ENCODE measurements at regions of chr5 and their contacts with region 1.

Region 1: DNA sequence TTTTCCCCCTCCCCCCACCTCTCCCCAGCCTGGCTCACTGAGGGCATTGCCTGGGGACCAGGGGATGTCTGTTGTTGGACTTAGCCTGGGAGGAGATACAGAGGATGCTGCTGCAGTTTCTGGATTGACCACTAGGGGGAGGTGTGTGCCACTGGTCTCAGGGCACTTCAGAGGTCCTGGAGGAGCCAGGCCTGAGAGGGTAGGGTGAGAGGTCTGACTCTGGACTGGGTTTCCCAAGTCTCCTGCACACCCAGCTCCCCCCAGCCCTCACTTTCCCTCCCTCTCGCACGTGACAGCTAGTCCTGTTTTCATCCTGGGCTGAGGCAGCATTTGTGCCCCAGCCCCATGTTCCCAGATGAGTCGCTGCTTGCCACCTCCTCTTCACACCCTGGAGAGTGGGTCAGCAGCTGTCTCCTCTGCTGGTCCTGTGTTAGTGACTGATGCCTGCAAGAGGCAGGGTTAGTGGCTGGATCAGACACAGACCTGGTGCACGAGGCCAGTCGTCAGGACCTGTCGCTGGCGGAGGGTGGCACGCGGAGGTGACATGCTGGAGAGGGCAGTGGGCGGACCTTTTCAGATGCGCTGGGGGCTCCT is 4.4 kb downstream of the IL3 start:
- DNase-seq: peak; percentile 90
- H3K4me3 Mint-ChIP-seq: peak overlapping the region; percentile 11
- H3K27ac Mint-ChIP-seq: peak overlapping the region; percentile 7
- H3K4me1 Mint-ChIP-seq: peaks cover 22% of the 10 kb centered on the region
- H3K27me3 Mint-ChIP-seq: no peaks in the 10 kb centered on the region

Region 2: GRCh38 chr5:131810510-131811249 is 254.2 kb before region 1 on chr5:
- CTCF ChIA-PET with region 1: interaction called, 12 read pairs
- POLR2A ChIA-PET with region 1: no interaction called
- intact Hi-C with region 1: loop called (anchors 1 kb)
- DNase-seq: no peak
- H3K4me3 Mint-ChIP-seq: no peak overlapping the region
- H3K27ac Mint-ChIP-seq: no peak overlapping the region
- H3K4me1 Mint-ChIP-seq: no peaks in the 10 kb centered on the region
- H3K27me3 Mint-ChIP-seq: no peaks in the 10 kb centered on the region

Region 3: DNA sequence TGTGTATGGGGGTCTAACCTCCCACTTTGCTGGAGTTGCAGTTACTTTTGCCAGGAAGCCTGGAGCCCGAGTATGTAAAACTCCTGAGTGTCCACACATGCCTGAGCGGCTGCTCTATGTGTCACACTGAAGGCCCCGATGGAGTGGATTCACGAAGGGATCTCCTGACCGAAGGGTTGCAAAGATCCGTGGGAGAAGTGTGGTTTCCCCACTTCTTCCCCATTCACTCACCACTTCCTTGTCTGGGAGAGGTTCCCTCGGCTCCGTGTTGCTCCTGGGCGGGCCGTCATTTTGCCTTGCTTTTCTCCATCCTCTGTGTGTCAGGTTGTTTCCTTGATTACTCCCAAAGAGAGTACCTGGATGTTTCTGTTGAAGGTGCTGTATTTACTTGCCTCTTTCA is 20.6 kb before region 1 on chr5:
- CTCF ChIA-PET with region 1: interaction called, 23 read pairs
- POLR2A ChIA-PET with region 1: no interaction called
- intact Hi-C with region 1: no loop called
- DNase-seq: no peak
- H3K4me3 Mint-ChIP-seq: no peak overlapping the region
- H3K27ac Mint-ChIP-seq: no peak overlapping the region
- H3K4me1 Mint-ChIP-seq: no peaks in the 10 kb centered on the region
- H3K27me3 Mint-ChIP-seq: peaks cover 8% of the 10 kb centered on the region

Region 4: DNA sequence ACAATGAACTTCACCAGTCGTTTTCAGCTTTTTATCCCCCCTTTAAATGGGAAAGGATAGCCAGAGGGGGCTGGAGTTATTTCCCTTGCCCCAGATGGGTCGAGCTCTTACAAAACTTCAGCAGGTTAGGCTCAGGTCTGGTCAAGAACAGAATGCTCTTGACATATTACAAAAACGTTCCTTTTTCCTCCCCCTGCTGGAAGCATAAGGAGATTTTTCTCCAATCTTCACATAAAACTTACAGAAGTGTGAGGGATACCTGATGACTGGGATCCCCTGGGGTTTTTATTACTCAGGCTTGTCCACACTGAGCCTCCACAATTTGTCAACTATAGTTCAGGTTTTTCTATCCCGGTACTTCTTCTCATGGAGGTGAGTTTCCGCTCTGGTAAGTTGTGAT is 69.5 kb after region 1 on chr5:
- CTCF ChIA-PET with region 1: interaction called, 21 read pairs
- POLR2A ChIA-PET with region 1: no interaction called
- intact Hi-C with region 1: loop called (anchors 1 kb)
- DNase-seq: no peak
- H3K4me3 Mint-ChIP-seq: no peak overlapping the region
- H3K27ac Mint-ChIP-seq: no peak overlapping the region
- H3K4me1 Mint-ChIP-seq: peaks cover 6% of the 10 kb centered on the region
- H3K27me3 Mint-ChIP-seq: peaks cover 9% of the 10 kb centered on the region

Region 5: DNA sequence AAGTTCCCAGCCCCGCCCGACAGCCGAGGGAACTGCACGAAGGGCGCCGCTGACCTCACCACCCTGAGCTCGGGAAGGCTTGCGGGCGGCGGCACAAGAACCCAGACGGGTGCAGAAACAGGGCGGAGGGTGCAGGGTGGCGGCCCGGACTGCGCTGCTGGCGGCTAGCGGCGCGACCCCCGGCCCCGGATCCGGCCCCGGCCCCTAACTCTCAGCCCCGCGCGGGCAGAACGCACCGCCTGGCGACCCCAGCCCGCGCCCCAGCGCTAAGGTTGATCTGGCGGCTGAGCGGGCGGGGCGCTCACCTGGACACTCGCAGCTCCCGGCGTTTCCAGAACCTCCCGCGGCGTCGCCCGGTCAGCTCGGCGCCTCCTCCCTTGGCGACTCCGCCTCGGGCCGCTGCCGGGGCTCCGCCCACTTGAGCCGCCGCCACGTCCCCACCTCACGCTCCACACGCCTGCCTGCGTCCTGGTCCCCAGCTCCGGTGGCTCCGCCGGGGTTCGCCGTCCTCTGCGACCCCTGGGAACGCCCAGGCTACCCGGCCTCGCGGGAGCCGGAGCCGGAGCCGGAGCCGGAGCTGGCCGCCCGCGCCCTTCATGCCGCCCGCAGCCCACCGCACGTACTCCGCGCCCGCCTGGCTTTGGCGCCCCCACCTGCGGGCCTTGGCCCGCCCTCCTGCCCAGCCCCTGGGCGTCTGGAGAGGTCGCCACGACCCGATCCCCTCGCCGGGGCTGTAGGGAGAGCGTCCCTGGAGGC is 162.8 kb after region 1 on chr5 and contains the start of gene P4HA2:
- CTCF ChIA-PET with region 1: interaction called, 5 read pairs
- POLR2A ChIA-PET with region 1: interaction called, 3 read pairs
- intact Hi-C with region 1: loop called (anchors 2 kb)
- DNase-seq: peak; percentile 67
- H3K4me3 Mint-ChIP-seq: peak within 1 kb of the TSS; percentile 24
- H3K27ac Mint-ChIP-seq: no peak within 1 kb of the TSS
- H3K4me1 Mint-ChIP-seq: peaks cover 9% of the 10 kb centered on the region
- H3K27me3 Mint-ChIP-seq: peaks cover 17% of the 10 kb centered on the region
- total RNA-seq, gene P4HA2: 6.0 to 6.1 TPM

Region 6: GRCh38 chr5:132386644-132387286 is 321.9 kb after region 1 on chr5:
- CTCF ChIA-PET with region 1: interaction called, 3 read pairs
- POLR2A ChIA-PET with region 1: no interaction called
- intact Hi-C with region 1: loop called (anchors 5 kb)
- DNase-seq: peak; percentile 87
- H3K4me3 Mint-ChIP-seq: no peak overlapping the region
- H3K27ac Mint-ChIP-seq: peak overlapping the region; percentile 14
- H3K4me1 Mint-ChIP-seq: peaks cover 42% of the 10 kb centered on the region
- H3K27me3 Mint-ChIP-seq: no peaks in the 10 kb centered on the region